ENCODE measurements at regions of chr16 and their contacts with region 1.

Region 1: DNA sequence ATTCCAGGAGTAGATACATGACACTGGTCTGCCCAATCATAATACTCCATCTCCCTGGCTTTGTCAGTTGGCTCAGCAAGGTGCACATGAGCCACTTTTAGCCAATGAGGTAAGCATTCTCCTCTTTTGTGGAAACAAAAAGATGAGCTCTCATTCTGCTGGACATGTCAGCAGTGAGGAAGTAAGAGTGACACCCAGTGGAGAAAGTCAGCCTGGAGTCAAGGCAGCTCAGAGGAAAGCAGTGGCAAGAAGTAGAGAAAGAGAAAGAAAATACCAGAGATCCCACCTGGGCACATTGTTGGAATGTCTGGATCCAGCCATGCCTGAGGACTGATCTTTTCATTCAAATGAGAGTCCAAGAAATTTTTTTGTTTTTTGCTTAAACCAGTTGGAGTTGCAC is 496.9 kb upstream of the C16orf82 start:
- DNase-seq: no peak
- ATAC-seq: peak; percentile 57
- H3K4me3 Mint-ChIP-seq: no peak overlapping the region
- H3K27ac Mint-ChIP-seq: no peak overlapping the region
- H3K4me1 Mint-ChIP-seq: peaks cover 6% of the 10 kb centered on the region
- H3K27me3 Mint-ChIP-seq: peaks cover 19% of the 10 kb centered on the region

Region 2: DNA sequence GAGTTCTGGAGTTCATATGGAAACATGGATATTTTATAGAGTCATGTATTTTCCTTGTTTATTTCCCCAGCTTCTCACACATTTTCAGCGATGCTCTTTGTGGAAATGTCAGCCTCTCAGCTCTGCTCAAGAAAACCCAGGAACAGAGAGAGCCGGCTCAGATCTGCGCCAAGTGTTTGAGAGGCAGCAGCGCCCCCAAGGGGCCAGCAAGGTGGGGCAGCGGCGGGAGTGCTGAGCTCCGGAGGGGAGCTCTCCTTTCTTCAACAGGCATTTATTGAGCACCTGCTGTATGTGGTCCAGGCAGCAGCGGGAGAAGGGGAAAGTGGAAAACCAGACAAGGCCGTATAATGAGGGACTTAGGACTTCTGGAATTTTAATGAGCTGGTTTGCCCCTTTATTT is 75.8 kb after region 1 on chr16:
- CTCF ChIA-PET with region 1: interaction called, 10 read pairs
- DNase-seq: peak; percentile 68
- ATAC-seq: peak; percentile 77
- H3K4me3 Mint-ChIP-seq: no peak overlapping the region
- H3K27ac Mint-ChIP-seq: no peak overlapping the region
- H3K4me1 Mint-ChIP-seq: peaks cover 32% of the 10 kb centered on the region
- H3K27me3 Mint-ChIP-seq: no peaks in the 10 kb centered on the region